GM12878 (cell line): ENCODE measurements at regions of chr1 and their contacts with region 1.

Region 1: GRCh38 chr1:206612129-206612876 is at the start of gene EIF2D:
- DNase-seq: peak; percentile 58
- ATAC-seq: peak; percentile 82
- H3K4me3 ChIP-seq: peak within 1 kb of the TSS; percentile 83
- H3K27ac ChIP-seq: peak within 1 kb of the TSS; percentile 80
- H3K4me1 ChIP-seq: peaks cover 23% of the 10 kb centered on the region
- H3K27me3 ChIP-seq: no peaks in the 10 kb centered on the region
- CTCF ChIP-seq: peak; percentile 96 to 99 (median 98); a peak in 5 of 6 replicates
- EP300 ChIP-seq: peak in 1 of 2 experiments; percentile 37; a peak in 1 of 4 replicates
- POLR2A ChIP-seq: peak; percentile 100
- RAD21 ChIP-seq: peak; percentile 59
- polyA plus RNA-seq, gene EIF2D: 65.4 to 77.5 TPM

Region 2: DNA sequence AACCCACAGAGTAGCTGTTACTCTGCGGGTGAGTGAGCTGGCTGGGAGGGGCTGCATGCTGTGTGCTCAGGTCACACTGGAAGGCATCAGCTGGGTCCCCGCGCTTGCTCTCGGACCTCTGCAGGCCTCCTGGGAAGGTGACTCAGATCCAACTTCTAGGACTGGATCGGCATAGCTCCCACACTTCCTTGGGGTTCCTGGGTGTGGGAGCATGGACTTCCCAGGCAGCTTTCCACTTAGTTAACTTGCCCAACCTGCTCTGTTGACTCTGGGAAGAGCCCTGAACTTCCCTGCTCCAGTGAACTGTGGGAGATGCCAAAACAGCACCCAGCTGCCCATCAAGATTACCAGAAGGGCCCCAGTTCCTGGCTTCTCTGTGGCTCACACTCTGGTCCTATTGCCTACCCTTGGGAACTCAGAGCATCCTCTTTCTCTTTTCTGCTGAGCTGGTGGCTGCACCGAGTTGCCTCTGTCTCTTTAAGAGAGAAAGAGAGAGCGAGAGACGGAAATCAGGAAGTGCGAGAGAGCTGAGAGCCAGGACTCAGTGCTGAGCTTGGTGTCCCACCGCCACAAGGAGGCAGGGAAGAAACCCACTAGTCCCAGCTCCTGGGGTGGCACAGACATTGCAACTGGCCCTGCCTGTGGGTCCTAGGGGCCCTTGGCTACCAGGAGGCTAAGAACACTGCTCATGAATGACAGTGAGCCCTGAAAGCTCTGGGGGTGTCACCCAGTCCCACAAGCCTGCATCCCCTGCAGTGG is 142.2 kb before region 1 on chr1 and contains the start of gene IKBKE:
- CTCF ChIA-PET with region 1: interaction called, 18 read pairs
- POLR2A ChIA-PET with region 1: interaction called, 5 read pairs
- RAD21 ChIA-PET with region 1: interaction called, 11 read pairs
- SMC1A ChIA-PET with region 1: interaction called, 4 read pairs
- in situ Hi-C with region 1: no loop called
- intact Hi-C with region 1: no loop called
- DNase-seq: no peak
- ATAC-seq: peak; percentile 73
- H3K4me3 ChIP-seq: peak within 1 kb of the TSS; percentile 94
- H3K27ac ChIP-seq: peak within 1 kb of the TSS; percentile 88
- H3K4me1 ChIP-seq: peaks cover 66% of the 10 kb centered on the region
- H3K27me3 ChIP-seq: no peaks in the 10 kb centered on the region
- CTCF ChIP-seq: peak; percentile 7 to 22 (median 17); a peak in 1 of 6 replicates
- EP300 ChIP-seq: no peak
- POLR2A ChIP-seq: peak; percentile 68
- RAD21 ChIP-seq: no peak
- polyA plus RNA-seq, gene IKBKE: 12.8 to 19.2 TPM

Region 3: DNA sequence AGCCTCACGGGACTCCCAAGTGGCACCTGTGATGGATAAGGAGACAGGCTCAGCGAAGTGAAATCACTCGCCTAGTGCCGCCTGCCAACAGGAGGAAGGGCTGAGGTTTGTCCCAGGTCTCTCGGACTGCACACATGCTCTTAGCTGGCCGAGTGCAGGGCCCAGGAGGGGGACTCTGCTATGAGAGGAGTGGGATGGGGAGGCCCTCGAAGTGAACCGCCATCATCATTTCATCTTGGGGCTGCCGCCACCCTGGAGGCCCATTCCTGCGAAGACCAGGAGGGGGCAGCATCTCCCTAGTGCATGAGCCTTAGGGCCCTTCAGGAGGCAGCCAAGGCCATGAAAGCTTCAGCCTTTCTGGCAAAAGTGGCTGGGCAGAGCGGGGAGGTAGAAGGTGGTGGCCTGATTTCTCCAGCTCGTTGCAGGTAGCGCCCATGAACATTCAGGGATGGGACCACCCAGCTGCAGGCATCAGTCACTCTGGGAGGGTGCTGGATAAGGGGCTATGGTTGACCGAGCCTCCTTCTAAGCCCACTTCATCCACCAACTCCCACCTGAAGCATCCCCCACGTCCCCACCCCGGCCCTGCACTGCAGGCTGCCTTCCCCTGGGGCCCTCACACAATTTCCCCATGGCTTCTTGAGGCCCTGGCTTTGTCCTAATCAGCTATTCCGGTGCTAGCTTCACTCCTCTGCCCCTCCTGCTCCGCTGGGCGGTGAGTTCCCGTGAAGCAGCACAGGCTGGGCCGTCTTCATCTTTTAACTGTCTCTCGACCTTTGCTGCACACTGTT is 122.1 kb before region 1 on chr1:
- CTCF ChIA-PET with region 1: interaction called, 10 read pairs
- POLR2A ChIA-PET with region 1: interaction called, 5 read pairs
- RAD21 ChIA-PET with region 1: interaction called, 8 read pairs
- SMC1A ChIA-PET with region 1: interaction called, 7 read pairs
- in situ Hi-C with region 1: no loop called
- intact Hi-C with region 1: no loop called
- DNase-seq: no peak
- ATAC-seq: peak; percentile 99
- H3K4me3 ChIP-seq: no peak overlapping the region
- H3K27ac ChIP-seq: no peak overlapping the region
- H3K4me1 ChIP-seq: peaks cover 5% of the 10 kb centered on the region
- H3K27me3 ChIP-seq: no peaks in the 10 kb centered on the region
- CTCF ChIP-seq: peak; percentile 91 to 97 (median 96)
- EP300 ChIP-seq: no peak
- POLR2A ChIP-seq: no peak
- RAD21 ChIP-seq: peak; percentile 97

Region 4: DNA sequence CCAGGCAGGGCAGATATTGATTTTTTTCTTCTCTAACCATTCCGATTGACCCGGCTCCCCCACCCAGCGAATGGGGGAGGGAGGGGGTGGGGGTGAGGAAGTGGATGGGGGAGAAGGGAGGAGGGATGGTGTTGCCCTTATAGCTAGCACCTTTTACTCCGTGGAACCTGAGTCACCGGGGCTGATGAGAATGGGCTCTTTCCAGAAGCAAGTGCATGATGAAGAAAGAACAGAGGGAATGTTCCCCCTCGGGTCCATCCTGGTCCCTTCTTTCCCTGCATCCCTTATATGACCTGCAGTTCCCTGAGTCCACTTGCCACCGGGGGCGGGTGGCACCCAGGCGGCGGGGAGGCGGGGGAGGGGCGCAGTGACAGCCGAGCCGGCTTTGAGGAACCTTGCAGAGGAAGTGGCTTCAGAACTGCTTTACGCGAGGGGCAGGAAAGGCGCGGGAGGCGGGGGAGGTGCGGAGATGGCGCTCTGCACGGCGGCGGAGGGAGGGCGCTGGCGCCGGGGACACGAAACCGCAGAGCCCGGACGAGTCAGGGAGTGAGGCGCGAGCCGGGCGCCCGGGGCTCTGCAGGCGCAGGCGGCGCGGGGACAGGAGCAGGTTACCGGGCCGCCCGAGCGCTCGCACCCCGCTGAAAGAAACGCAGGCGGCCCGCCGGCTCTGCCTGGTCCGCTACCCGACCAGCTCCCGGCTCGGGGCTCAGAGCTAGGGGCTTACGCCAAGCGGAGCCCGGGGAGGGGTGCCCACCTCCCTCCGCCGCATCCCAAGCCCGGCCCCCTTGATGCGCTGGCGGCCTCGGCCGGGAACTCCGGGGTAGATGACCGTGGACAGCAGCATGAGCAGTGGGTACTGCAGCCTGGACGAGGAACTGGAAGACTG is 55.3 kb before region 1 on chr1:
- CTCF ChIA-PET with region 1: interaction called, 11 read pairs
- POLR2A ChIA-PET with region 1: no interaction called
- RAD21 ChIA-PET with region 1: interaction called, 7 read pairs
- SMC1A ChIA-PET with region 1: interaction called, 9 read pairs
- in situ Hi-C with region 1: no loop called
- intact Hi-C with region 1: loop called (anchors 2 kb)
- DNase-seq: no peak
- ATAC-seq: peak; percentile 76
- H3K4me3 ChIP-seq: peak overlapping the region; percentile 95
- H3K27ac ChIP-seq: peak overlapping the region; percentile 98
- H3K4me1 ChIP-seq: peaks cover 42% of the 10 kb centered on the region
- H3K27me3 ChIP-seq: no peaks in the 10 kb centered on the region
- CTCF ChIP-seq: no peak
- EP300 ChIP-seq: peak in 1 of 2 experiments; percentile 51; a peak in 2 of 4 replicates
- POLR2A ChIP-seq: peak; percentile 90
- RAD21 ChIP-seq: no peak

Region 5: DNA sequence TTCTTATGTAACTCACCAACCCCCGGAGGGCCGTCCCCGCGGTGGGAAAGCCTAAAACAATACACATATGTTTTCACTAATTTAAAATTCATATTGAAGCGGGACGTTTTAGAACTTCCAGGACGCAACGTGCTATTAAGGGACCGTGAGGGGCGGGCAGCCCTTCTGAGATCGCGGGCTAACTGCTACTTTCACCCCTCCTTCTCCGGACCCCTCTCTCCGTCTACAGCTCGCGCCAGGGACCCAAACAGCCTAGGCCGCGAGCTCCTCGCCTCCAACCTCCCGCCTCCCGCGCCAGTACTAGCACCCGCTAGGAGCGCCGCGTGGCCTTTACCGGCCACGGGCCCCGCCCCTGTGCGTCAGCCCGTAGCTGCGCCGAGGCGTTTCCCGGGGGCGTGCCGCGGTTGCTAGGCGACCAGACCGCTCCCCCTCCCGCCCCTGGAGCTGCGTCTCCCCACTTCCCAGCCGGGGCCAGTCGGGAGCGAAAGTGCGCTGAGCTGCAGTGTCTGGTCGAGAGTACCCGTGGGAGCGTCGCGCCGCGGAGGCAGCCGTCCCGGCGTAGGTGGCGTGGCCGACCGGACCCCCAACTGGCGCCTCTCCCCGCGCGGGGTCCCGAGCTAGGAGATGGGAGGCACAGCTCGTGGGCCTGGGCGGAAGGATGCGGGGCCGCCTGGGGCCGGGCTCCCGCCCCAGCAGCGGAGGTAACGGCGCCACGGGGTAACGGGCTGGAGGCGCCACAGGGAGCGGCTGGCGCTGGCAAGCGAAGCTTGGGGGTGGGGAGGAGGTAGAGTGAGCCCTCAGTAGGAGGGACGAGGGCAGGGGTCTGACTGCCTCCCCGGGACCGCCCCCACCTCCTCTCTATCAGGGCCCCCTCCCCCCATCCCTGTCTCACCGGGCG is 23.0 kb after region 1 on chr1 and contains the start of gene DYRK3:
- CTCF ChIA-PET with region 1: interaction called, 148 read pairs
- POLR2A ChIA-PET with region 1: interaction called, 16 read pairs
- RAD21 ChIA-PET with region 1: interaction called, 45 read pairs
- SMC1A ChIA-PET with region 1: interaction called, 46 read pairs
- in situ Hi-C with region 1: no loop called
- intact Hi-C with region 1: loop called (anchors 2 kb)
- DNase-seq: peak; percentile 71
- ATAC-seq: peak; percentile 92
- H3K4me3 ChIP-seq: peak within 1 kb of the TSS; percentile 94
- H3K27ac ChIP-seq: peak within 1 kb of the TSS; percentile 62
- H3K4me1 ChIP-seq: peaks cover 26% of the 10 kb centered on the region
- H3K27me3 ChIP-seq: no peaks in the 10 kb centered on the region
- CTCF ChIP-seq: 0 out of 6 replicates have a peak, but pooled peaks of 1 of the 3 experiments have one; percentile 5
- EP300 ChIP-seq: 0 out of 4 replicates have a peak, but pooled peaks of 1 of the 2 experiments have one; percentile 17
- POLR2A ChIP-seq: peak; percentile 94
- RAD21 ChIP-seq: no peak
- polyA plus RNA-seq, gene DYRK3: 1.6 to 2.8 TPM

Region 6: GRCh38 chr1:206674745-206675175 is 62.5 kb after region 1 on chr1:
- CTCF ChIA-PET with region 1: interaction called, 197 read pairs
- POLR2A ChIA-PET with region 1: interaction called, 3 read pairs
- RAD21 ChIA-PET with region 1: interaction called, 6 read pairs
- SMC1A ChIA-PET with region 1: interaction called, 3 read pairs
- in situ Hi-C with region 1: no loop called
- intact Hi-C with region 1: loop called (anchors 5 kb)
- DNase-seq: no peak
- ATAC-seq: no peak
- H3K4me3 ChIP-seq: no peak overlapping the region
- H3K27ac ChIP-seq: no peak overlapping the region
- H3K4me1 ChIP-seq: peaks cover 51% of the 10 kb centered on the region
- H3K27me3 ChIP-seq: no peaks in the 10 kb centered on the region
- CTCF ChIP-seq: no peak
- EP300 ChIP-seq: no peak
- POLR2A ChIP-seq: no peak
- RAD21 ChIP-seq: no peak

Region 7: GRCh38 chr1:206693029-206693428 is 80.7 kb after region 1 on chr1:
- CTCF ChIA-PET with region 1: no interaction called
- POLR2A ChIA-PET with region 1: no interaction called
- RAD21 ChIA-PET with region 1: no interaction called
- SMC1A ChIA-PET with region 1: no interaction called
- in situ Hi-C with region 1: no loop called
- intact Hi-C with region 1: no loop called
- DNase-seq: no peak
- ATAC-seq: no peak; the same call in 2 of the 3 replicates
- H3K4me3 ChIP-seq: no peak overlapping the region
- H3K27ac ChIP-seq: no peak overlapping the region
- H3K4me1 ChIP-seq: peaks cover 22% of the 10 kb centered on the region
- H3K27me3 ChIP-seq: no peaks in the 10 kb centered on the region
- CTCF ChIP-seq: no peak
- EP300 ChIP-seq: no peak
- POLR2A ChIP-seq: no peak
- RAD21 ChIP-seq: no peak

Region 8: DNA sequence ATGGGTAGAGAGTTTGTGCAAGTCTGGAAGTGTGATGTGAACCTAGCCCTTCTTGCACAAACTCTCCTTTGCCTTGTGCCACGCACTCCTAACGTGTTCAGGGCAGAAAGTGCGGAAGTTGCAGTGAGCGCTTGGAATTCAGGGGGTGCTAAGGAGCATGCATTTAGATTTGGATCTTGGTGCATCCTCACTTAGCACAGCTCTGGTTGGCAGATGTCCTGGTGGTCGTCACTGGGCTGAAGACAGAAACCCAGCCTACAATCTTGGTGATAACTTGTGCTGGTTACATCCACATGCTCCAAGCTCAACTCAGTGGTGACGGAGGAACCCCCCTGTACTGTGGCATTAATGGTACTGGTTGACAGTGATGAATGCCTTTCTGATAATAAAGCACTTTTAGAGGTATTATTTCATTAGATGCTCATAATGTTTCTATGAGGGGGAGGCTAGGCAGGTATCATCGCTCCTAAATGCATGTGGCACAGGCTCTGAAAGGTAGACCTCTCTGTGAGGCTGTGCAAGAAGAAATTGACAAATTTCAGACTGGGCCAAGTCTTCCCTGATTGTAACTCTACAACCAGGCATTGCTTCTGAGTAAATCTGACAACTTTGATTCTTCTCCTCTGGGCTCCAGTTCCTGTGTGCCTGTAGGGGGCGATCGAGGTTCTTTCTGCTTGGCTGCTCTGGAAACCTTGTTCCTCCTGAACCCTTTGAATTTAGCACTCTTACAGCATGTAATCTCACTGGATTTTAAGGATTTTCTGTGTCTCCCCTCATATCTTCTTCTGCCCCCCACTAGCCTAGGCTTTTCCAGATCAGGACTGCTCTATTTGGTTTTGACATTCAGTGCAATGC is 113.0 kb after region 1 on chr1:
- CTCF ChIA-PET with region 1: interaction called, 11 read pairs
- POLR2A ChIA-PET with region 1: interaction called, 13 read pairs
- RAD21 ChIA-PET with region 1: interaction called, 4 read pairs
- SMC1A ChIA-PET with region 1: no interaction called
- in situ Hi-C with region 1: no loop called
- intact Hi-C with region 1: no loop called
- DNase-seq: no peak
- ATAC-seq: peak; percentile 84
- H3K4me3 ChIP-seq: no peak overlapping the region
- H3K27ac ChIP-seq: 0 out of 2 replicates have a peak overlapping the region, but pooled peaks have one; percentile 34
- H3K4me1 ChIP-seq: peaks cover 29% of the 10 kb centered on the region
- H3K27me3 ChIP-seq: no peaks in the 10 kb centered on the region
- CTCF ChIP-seq: peak; percentile 59 to 78 (median 73)
- EP300 ChIP-seq: no peak
- POLR2A ChIP-seq: no peak
- RAD21 ChIP-seq: peak; percentile 53